Posterior vena cava (tissue), 2 donors: ENCODE measurements at regions of chr11 and their contacts with region 1.

Region 1: GRCh38 chr11:118198370-118198769 is 21.9 kb upstream of the SCN2B start:
- DNase-seq: peak; percentile 93

Region 2: GRCh38 chr11:118263695-118264567 is 65.6 kb after region 1 on chr11 and contains the start of gene MPZL2:
- intact Hi-C with region 1: loop called in 1 of 2 experiments (anchors 10 kb)
- DNase-seq: no peak
- total RNA-seq, gene MPZL2: 29.8 to 53.3 TPM

Region 3: GRCh38 chr11:118342503-118343161 is 144.3 kb after region 1 on chr11 and contains the start of gene CD3D:
- intact Hi-C with region 1: loop called in 1 of 2 experiments (anchors 10 kb)
- DNase-seq: no peak
- total RNA-seq, gene CD3D: 1.2 TPM in 1 of 2 donors, not detected in the other

Region 4: DNA sequence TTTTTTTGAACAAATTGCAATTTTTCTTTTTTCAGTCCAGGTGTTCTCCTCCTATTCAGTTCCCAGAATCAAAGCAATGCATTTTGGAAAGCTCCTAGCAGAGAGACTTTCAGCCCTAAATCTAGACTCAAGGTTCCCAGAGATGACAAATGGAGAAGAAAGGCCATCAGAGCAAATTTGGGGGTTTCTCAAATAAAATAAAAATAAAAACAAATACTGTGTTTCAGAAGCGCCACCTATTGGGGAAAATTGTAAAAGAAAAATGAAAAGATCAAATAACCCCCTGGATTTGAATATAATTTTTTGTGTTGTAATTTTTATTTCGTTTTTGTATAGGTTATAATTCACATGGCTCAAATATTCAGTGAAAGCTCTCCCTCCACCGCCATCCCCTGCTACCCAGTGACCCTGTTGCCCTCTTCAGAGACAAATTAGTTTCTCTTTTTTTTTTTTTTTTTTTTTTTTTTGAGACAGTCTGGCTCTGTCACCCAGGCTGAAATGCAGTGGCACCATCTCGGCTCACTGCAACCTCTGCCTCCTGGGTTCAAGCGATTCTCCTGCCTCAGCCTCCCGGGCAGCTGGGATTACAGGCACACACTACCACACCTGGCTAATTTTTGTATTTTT is 154.8 kb after region 1 on chr11:
- intact Hi-C with region 1: loop called (anchors 5 to 10 kb)
- DNase-seq: no peak